ENCODE measurements at regions of chr15 and their contacts with region 1.

Region 1: GRCh38 chr15:59096429-59096828 is 8.5 kb upstream of the CCNB2 start:
- DNase-seq: no peak
- ATAC-seq: no peak

Region 2: GRCh38 chr15:59147666-59148065 is 51.2 kb after region 1 on chr15:
- intact Hi-C with region 1: loop called (anchors 2 kb)
- DNase-seq: no peak
- ATAC-seq: no peak

Measured in sciatic nerve (tissue), 2 donors.